Gastrocnemius medialis (tissue), 4 donors: ENCODE measurements at regions of chr1 and their contacts with region 1.

Region 1: DNA sequence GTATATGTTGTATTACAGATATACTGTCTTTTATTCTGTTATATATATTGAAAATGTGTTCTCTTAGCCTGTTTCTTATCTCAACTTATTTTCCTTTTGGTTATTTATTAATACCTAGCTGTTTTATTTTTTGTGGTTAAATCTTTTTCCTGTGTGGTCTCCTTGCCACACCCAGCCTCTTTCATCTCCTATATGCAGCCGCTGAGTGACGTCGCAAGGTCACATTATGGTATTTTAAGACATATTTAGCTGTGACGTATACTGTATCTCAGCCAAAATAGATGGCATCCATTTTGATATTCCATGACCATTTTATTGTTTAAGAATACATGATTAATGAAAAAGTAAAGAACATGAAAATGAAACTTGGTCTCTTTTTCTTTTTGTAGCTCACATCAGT is 29.1 kb downstream of the CENPF start:
- DNase-seq: no peak
- ATAC-seq: no peak
- H3K4me3 ChIP-seq: no peak overlapping the region
- H3K27ac ChIP-seq: no peak overlapping the region
- H3K4me1 ChIP-seq: no peaks in the 10 kb centered on the region
- H3K27me3 ChIP-seq: no peaks in the 10 kb centered on the region
- CTCF ChIP-seq: no peak
- POLR2A ChIP-seq: no peak

Region 2: GRCh38 chr1:214213136-214213535 is 419.0 kb before region 1 on chr1:
- in situ Hi-C with region 1: no loop called
- intact Hi-C with region 1: loop called (anchors 5 kb)
- DNase-seq: no peak
- ATAC-seq: no peak
- H3K4me3 ChIP-seq: no peak overlapping the region
- H3K27ac ChIP-seq: no peak overlapping the region
- H3K4me1 ChIP-seq: peaks cover 8 to 13% of the 10 kb centered on the region in 2 donors
- H3K27me3 ChIP-seq: no peaks in the 10 kb centered on the region
- CTCF ChIP-seq: no peak
- POLR2A ChIP-seq: no peak

Region 3: DNA sequence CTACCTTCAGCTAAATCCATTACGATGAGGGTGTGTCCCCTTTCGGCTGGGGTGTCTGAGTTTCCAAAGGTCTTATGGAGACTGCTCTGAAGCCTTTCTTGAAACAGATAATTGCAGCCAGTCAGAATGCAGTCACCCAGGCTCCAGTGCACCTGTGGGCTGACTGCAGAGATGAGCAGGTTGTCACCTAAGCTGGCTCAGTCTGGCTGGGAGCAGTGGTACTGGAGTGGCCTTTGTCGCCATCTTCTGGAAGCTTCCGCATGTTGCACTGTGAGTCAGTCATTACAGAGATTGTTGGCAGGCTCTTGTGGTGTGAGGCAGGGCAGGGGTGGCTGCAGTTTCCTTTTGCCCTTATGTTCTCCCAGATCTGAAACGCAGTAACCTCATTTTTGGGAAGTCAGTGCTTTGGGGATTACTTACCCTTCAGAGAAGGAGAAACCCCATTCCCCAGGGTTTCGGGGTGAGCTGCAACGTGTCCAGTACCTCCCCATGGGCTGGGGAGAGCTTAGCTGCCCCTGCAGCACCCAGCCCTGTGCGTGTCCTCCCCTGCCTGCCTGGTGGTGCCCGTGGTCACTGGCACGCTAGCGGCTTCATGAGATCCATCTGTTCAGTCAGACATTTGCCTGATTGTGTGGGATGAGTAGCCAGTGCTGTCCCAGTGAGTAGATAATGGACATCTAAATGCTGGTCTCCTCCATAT is 303.2 kb before region 1 on chr1:
- in situ Hi-C with region 1: no loop called
- intact Hi-C with region 1: loop called (anchors 2 kb)
- DNase-seq: peak; percentile 73 to 82
- ATAC-seq: peak; percentile 93 to 95
- H3K4me3 ChIP-seq: no peak overlapping the region
- H3K27ac ChIP-seq: no peak overlapping the region
- H3K4me1 ChIP-seq: peaks cover 6 to 15% of the 10 kb centered on the region in 2 donors
- H3K27me3 ChIP-seq: no peaks in the 10 kb centered on the region
- CTCF ChIP-seq: peak; percentile 92 to 98 (median 96)
- POLR2A ChIP-seq: no peak

Region 4: DNA sequence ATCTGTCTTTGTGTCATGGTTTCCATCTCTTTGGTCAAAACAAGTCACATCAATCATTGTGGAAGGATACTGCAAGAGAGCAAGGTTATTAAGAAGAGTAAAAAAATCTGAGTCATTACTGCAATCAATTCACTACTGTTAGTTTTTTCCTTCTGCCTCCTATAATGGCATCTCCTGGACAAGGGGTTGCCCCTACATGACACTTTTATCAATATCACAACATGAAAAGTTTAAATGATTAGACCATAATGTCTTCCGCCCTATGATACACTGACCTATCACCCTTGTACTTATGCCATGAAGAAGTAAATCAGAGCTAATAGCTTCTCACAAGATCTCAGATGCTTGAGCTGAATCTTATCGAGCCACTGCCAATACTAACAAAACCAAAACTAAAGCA is 674.3 kb after region 1 on chr1:
- in situ Hi-C with region 1: no loop called
- intact Hi-C with region 1: no loop called
- DNase-seq: no peak
- ATAC-seq: no peak
- H3K4me3 ChIP-seq: no peak overlapping the region
- H3K27ac ChIP-seq: no peak overlapping the region
- H3K4me1 ChIP-seq: no peaks in the 10 kb centered on the region
- H3K27me3 ChIP-seq: no peaks in the 10 kb centered on the region
- CTCF ChIP-seq: no peak
- POLR2A ChIP-seq: no peak

Region 5: GRCh38 chr1:215526553-215527151 is 894.6 kb after region 1 on chr1:
- in situ Hi-C with region 1: loop called in 2 of 4 experiments (anchors 10 kb)
- intact Hi-C with region 1: loop called (anchors 5 kb)
- DNase-seq: no peak
- ATAC-seq: no peak
- H3K4me3 ChIP-seq: no peak overlapping the region
- H3K27ac ChIP-seq: no peak overlapping the region
- H3K4me1 ChIP-seq: no peaks in the 10 kb centered on the region
- H3K27me3 ChIP-seq: no peaks in the 10 kb centered on the region
- CTCF ChIP-seq: peak; percentile 53 to 70 (median 57)
- POLR2A ChIP-seq: no peak